ENCODE measurements at regions of chr17 and their contacts with region 1.

Region 1: GRCh38 chr17:81833160-81833920 is at the start of gene MCRIP1:
- DNase-seq: peak; percentile 98
- ATAC-seq: peak; percentile 78
- H3K4me3 Mint-ChIP-seq: peak within 1 kb of the TSS; percentile 87
- H3K27ac Mint-ChIP-seq: peak within 1 kb of the TSS; percentile 91
- H3K4me1 Mint-ChIP-seq: peaks cover 17% of the 10 kb centered on the region
- H3K27me3 Mint-ChIP-seq: no peaks in the 10 kb centered on the region
- total RNA-seq, gene MCRIP1: 45.8 to 50.4 TPM

Region 2: DNA sequence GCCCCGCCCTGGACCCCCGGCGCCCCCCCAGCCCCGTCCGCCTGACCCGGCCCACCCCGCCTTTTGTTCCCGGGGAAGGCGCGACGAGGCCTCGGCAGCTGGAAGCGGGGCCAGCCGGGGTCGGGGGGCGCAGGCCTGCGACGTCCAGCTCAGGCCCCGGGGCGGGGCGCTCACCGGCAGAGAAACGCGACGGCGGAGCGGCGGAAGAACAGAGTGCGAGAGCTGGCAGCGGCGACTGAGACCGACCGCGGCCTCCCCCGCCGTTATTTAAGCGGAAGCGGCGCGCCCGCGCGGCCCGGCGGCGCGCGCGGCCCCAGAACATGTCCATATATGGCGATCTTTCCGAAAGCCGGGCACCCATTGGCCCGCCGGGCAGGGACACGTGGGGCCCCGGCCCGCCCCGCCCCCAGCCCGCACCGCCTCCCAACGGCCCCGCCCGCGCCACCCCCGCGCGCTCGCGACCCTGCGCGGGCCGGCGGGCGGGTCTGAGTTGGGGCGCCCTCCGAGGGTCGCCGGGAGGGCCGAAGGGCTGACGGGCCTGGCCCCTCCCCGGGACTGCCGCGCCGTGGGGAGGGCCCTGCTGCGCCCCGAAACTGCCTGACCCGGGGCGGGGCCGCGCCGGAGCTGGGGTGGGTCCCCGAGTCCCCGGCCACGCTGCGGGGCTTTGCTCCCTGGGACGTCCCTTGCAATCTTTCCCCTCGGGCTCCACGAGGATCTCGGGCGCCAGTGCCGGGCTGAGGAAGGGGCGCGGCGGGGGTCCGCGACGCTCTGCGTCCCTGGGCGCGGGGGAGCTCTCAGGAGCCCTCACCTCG is 320.6 kb before region 1 on chr17 and contains the start of gene ACTG1:
- CTCF ChIA-PET with region 1: no interaction called
- POLR2A ChIA-PET with region 1: no interaction called
- intact Hi-C with region 1: loop called in 1 of 2 experiments (anchors 2 kb)
- DNase-seq: peak; percentile 95
- ATAC-seq: peak; percentile 61
- H3K4me3 Mint-ChIP-seq: peak within 1 kb of the TSS; percentile 97
- H3K27ac Mint-ChIP-seq: peak within 1 kb of the TSS; percentile 89
- H3K4me1 Mint-ChIP-seq: peaks cover 21% of the 10 kb centered on the region
- H3K27me3 Mint-ChIP-seq: no peaks in the 10 kb centered on the region
- total RNA-seq, gene ACTG1: 4,119 to 5,987 TPM

Region 3: DNA sequence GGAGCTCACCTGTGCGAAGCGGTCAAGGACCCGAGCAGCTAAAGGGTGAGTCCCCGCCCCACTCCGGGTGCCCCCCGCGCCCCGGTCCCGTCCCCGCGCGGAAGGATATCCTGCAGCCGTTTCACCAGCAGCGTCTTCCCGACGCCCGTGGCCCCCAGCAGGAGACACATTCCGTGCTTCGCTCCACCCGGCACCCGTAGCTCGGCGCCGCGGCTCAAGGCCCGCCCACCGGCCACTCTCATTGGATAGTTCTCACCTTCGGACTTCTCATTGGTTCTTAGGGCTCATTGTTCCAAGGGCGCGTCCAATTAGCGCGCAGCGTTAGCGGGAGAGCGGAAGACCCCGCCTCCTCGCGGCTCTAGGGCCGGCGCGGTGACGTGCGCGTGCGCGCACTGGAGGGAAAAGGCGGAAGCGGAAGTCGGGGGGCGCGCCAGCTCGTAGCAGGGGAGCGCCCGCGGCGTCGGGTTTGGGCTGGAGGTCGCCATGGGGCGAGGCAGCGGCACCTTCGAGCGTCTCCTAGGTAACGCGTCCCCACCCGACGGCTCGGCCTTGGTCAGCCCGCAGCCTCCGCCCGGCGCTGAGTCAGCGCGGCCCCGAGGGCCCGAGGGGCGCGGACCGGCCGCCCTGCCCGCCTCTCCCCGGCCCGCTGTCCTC is 149.6 kb before region 1 on chr17 and contains the starts of genes ARL16 and HGS:
- CTCF ChIA-PET with region 1: no interaction called
- POLR2A ChIA-PET with region 1: no interaction called
- intact Hi-C with region 1: loop called in 1 of 2 experiments (anchors 1 kb)
- DNase-seq: peak; percentile 98
- ATAC-seq: peak; percentile 98
- H3K4me3 Mint-ChIP-seq: peak within 1 kb of the TSS; percentile 87
- H3K27ac Mint-ChIP-seq: peak within 1 kb of the TSS; percentile 83
- H3K4me1 Mint-ChIP-seq: peaks cover 30% of the 10 kb centered on the region
- H3K27me3 Mint-ChIP-seq: no peaks in the 10 kb centered on the region
- total RNA-seq, gene ARL16: 39.0 to 39.1 TPM
- total RNA-seq, gene HGS: 100 to 102 TPM

Region 4: GRCh38 chr17:81860756-81861518 is 27.6 kb after region 1 on chr17:
- CTCF ChIA-PET with region 1: no interaction called
- POLR2A ChIA-PET with region 1: no interaction called
- intact Hi-C with region 1: loop called (anchors 1 kb)
- DNase-seq: peak; percentile 99
- ATAC-seq: peak; percentile 91
- H3K4me3 Mint-ChIP-seq: peak overlapping the region; percentile 99
- H3K27ac Mint-ChIP-seq: peak overlapping the region; percentile 98
- H3K4me1 Mint-ChIP-seq: peaks cover 50% of the 10 kb centered on the region
- H3K27me3 Mint-ChIP-seq: no peaks in the 10 kb centered on the region

Region 5: DNA sequence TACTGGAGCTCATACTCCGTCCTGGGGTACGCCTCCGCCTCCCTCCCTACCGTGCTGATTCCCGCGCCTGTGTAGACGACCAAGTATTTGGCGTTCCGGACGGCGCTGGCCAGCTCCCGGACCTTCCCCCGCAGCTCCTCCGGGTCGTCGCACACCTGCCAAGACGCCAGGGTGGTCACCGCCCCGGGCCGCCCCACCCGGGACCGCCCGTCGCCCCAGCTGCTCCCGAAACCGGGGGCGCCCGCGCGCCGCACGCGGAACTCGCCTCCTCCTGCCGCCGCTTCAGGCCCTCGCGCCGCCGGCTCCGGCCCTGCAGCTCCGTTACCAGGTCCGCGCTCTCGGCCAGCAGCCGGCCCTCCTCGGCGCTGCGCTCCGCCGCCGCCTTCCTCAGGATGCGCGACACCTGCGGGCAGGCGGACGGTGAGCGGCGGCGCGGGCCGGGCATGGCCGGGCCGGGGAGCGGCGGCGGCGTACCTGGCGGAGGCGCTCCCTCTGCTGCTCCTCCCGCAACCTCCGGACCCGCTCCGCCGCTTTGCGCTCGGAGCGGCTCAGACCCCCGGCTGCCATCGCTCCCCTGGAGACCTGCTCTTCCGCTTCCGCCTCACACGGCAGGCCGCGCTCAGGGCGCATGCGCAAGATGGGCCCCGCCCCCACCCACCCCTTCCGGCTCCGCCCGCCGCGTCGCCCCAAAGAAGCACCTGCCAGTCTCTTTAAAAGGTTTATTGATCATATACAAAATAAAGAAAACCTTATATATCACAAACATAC is 84.4 kb after region 1 on chr17 and contains the start of gene SIRT7:
- CTCF ChIA-PET with region 1: no interaction called
- POLR2A ChIA-PET with region 1: no interaction called
- intact Hi-C with region 1: loop called in 1 of 2 experiments (anchors 1 kb)
- DNase-seq: peak; percentile 90
- ATAC-seq: peak; percentile 87
- H3K4me3 Mint-ChIP-seq: peak within 1 kb of the TSS; percentile 85
- H3K27ac Mint-ChIP-seq: peak within 1 kb of the TSS; percentile 82
- H3K4me1 Mint-ChIP-seq: peaks cover 23% of the 10 kb centered on the region
- H3K27me3 Mint-ChIP-seq: no peaks in the 10 kb centered on the region
- total RNA-seq, gene SIRT7: 29.3 to 31.8 TPM

Region 6: DNA sequence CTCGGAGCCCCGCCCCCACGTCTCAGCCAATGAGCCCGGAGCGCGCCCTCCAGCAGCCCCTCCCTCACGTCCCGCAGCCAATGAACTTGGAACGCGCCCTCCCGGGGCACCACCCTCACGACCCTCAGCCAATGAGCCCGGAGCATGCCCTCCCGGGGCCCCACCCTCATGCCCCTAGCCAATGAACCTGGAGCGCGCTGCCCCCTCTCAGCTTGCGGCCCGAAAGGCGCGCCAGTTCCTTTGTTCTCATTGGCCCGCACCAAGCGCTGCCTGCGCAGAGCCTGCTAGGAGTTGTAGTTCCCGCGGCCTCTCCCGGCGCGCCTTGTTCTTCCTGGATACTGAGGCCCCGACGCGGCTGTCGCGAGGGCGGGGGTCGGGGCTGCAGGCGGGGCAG is 189.6 kb after region 1 on chr17 and contains the start of gene LRRC45:
- CTCF ChIA-PET with region 1: no interaction called
- POLR2A ChIA-PET with region 1: interaction called, 3 read pairs
- intact Hi-C with region 1: loop called in 1 of 2 experiments (anchors 1 kb)
- DNase-seq: peak; percentile 100
- ATAC-seq: peak; percentile 97
- H3K4me3 Mint-ChIP-seq: peak within 1 kb of the TSS; percentile 84
- H3K27ac Mint-ChIP-seq: peak within 1 kb of the TSS; percentile 76
- H3K4me1 Mint-ChIP-seq: peaks cover 14% of the 10 kb centered on the region
- H3K27me3 Mint-ChIP-seq: no peaks in the 10 kb centered on the region
- total RNA-seq, gene LRRC45: 17.6 to 20.6 TPM

Region 7: GRCh38 chr17:82400830-82401229 is 567.5 kb after region 1 on chr17:
- CTCF ChIA-PET with region 1: no interaction called
- POLR2A ChIA-PET with region 1: no interaction called
- intact Hi-C with region 1: no loop called
- DNase-seq: peak; percentile 77
- ATAC-seq: peak; percentile 89
- H3K4me3 Mint-ChIP-seq: peak overlapping the region; percentile 62
- H3K27ac Mint-ChIP-seq: peak overlapping the region; percentile 73
- H3K4me1 Mint-ChIP-seq: peaks cover 16% of the 10 kb centered on the region
- H3K27me3 Mint-ChIP-seq: no peaks in the 10 kb centered on the region